ENCODE measurements at regions of chr10 and their contacts with region 1.

Region 1: DNA sequence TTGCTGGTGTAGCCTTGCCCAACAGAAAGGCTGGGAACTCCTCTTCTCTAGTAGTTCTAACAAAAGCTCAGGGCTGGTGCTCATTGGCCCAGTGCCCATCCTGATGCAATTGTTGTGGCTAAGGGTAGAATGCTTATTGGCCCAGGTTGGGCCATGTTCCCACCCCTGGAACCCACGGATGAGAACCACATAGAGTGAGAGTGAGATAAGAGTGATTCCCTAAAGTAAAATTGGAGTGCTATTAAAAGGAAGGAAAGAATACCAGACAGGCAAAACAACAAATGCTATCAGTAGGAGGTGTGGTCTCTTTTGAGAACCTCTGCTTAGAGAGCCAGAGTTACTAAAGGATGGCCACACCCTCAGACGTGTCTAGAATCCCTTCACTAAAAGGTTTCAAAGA is 49.2 kb downstream of the LGI1 start:
- DNase-seq: no peak
- CTCF ChIP-seq: no peak

Region 2: DNA sequence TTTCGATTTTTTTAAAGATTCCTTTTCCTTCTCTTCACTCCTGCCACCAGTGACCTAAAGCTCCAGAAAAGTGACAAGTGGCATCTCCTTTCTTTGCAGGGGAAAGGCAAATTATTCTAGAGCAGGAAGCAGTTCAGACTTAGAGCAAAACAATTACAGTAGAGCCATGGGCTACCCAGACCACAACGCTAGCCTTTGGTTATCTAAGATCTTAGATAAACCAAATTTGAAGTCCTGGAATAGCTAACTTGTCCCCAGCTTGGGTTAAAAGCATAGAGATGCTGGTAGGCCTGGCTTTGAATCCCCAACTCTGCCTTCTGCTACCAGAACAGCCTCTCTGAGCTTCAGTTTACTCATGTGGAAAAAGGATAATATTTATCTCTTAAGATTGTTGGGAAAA is 10.7 kb before region 1 on chr10:
- CTCF ChIA-PET with region 1: interaction called, 11 read pairs
- POLR2A ChIA-PET with region 1: no interaction called
- DNase-seq: no peak
- CTCF ChIP-seq: no peak

Measured in GM10248 (cell line).